CD4-positive, alpha-beta T cell (primary cell): ENCODE measurements at regions of chr18 and their contacts with region 1.

Region 1: DNA sequence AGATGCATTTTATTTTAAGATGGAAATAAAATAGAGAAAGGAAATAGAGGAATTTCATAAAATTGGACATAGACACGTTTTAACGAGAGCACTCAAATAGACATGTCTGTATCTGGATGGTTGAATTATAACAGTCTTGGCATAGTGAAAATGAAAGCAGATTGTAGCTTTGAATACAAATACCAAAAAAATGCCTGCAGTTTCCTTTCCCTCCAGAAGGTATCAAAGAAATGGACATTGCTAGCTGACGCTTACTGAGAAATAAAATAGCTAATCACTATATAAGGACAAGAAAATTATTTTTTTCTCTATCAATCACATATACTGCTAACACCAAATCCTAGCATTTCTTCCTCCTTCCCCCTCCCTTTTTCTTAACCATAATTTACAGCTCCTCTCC is 11.4 kb upstream of the MAPRE2 start:
- DNase-seq: peak in 3 of 14 experiments; percentile 65 to 80 (median 66)
- ATAC-seq: peak; percentile 39
- H3K4me3 ChIP-seq: peak overlapping the region; percentile 51
- H3K4me3 Mint-ChIP-seq: peak overlapping the region; percentile 82
- H3K27ac ChIP-seq: peak overlapping the region; percentile 80 to 89
- H3K27ac Mint-ChIP-seq: peak overlapping the region; percentile 98
- H3K4me1 ChIP-seq: peaks cover 34% of the 10 kb centered on the region
- H3K4me1 Mint-ChIP-seq: peaks cover 70% of the 10 kb centered on the region
- H3K27me3 ChIP-seq: no peaks in the 10 kb centered on the region
- H3K27me3 Mint-ChIP-seq: no peaks in the 10 kb centered on the region
- CTCF ChIP-seq: peak; percentile 16

Region 2: GRCh38 chr18:33987206-33987605 is 1042.6 kb before region 1 on chr18:
- CTCF ChIA-PET with region 1: no interaction called
- POLR2A ChIA-PET with region 1: no interaction called
- intact Hi-C with region 1: no loop called
- DNase-seq: no peak
- ATAC-seq: no peak
- H3K4me3 ChIP-seq: no peak overlapping the region
- H3K4me3 Mint-ChIP-seq: no peak overlapping the region
- H3K27ac ChIP-seq: no peak overlapping the region
- H3K27ac Mint-ChIP-seq: no peak overlapping the region
- H3K4me1 ChIP-seq: no peaks in the 10 kb centered on the region
- H3K4me1 Mint-ChIP-seq: no peaks in the 10 kb centered on the region
- H3K27me3 ChIP-seq: no peaks in the 10 kb centered on the region
- H3K27me3 Mint-ChIP-seq: no peaks in the 10 kb centered on the region
- CTCF ChIP-seq: no peak

Region 3: DNA sequence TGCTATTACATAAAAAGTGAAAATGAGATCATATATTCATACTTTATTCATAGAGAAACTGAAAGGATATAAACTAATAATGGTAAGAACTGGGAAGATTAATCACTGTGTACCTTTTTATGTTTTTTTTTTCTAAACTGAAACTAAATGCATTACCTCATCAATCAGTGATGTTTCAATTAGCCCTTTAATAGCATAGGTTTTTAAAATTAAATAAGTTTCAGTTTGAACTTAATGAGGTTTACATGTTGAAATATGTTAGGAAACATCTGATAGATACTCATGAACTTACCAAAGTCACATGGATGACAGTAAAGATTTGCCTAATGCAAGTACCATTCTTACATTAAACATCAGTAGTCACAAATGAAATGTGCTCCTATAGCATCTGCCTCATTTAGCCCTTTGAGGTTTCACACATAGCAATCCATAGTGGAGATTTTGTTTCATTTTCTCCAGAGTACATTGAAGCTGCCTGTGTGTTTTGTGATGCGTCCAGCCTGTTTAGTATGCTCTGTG is 20.3 kb after region 1 on chr18:
- CTCF ChIA-PET with region 1: interaction called, 6 read pairs
- POLR2A ChIA-PET with region 1: interaction called, 44 read pairs
- intact Hi-C with region 1: no loop called
- DNase-seq: peak in 1 of 14 experiments; percentile 28
- ATAC-seq: peak; percentile 15
- H3K4me3 ChIP-seq: no peak overlapping the region
- H3K4me3 Mint-ChIP-seq: peak overlapping the region; percentile 83
- H3K27ac ChIP-seq: no peak overlapping the region
- H3K27ac Mint-ChIP-seq: peak overlapping the region; percentile 83
- H3K4me1 ChIP-seq: peaks cover 34% of the 10 kb centered on the region
- H3K4me1 Mint-ChIP-seq: peaks cover 88% of the 10 kb centered on the region
- H3K27me3 ChIP-seq: no peaks in the 10 kb centered on the region
- H3K27me3 Mint-ChIP-seq: no peaks in the 10 kb centered on the region
- CTCF ChIP-seq: no peak

Region 4: DNA sequence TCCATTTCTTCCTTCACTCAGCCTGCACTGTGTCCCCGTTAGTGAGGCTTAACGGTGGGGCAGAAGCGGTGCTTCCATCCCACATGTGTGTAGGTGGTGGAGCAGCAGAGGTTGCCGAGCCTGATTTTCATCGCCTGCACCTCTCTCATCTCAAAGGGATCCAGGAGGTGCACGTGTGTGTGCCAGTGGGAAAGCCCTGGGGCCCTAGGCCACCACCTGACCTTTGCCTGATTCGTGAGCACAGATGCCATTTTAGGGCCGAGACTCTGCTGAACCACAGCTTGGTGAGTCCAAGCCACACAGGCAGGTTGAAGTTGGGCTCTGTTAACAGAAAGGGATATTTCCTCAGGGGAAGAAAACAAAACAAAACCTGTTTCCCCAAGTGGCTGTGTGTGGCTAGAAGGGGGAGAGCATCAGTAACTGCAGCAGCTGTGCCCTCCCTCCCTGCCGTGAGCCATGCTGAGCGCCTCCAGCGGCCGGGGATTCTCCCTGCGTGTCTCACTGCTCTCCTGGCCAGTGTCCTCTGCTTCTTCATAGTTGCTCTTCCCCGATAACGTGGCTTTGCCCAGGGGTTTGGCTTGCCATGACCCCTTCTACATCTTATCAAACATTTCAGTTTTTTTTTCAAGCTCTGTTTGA is 92.9 kb after region 1 on chr18:
- CTCF ChIA-PET with region 1: interaction called, 11 read pairs
- POLR2A ChIA-PET with region 1: interaction called, 4 read pairs
- intact Hi-C with region 1: loop called in 1 of 2 experiments (anchors 5 kb)
- DNase-seq: peak in 3 of 14 experiments; percentile 35 to 45 (median 45)
- ATAC-seq: peak; percentile 65
- H3K4me3 ChIP-seq: no peak overlapping the region
- H3K4me3 Mint-ChIP-seq: no peak overlapping the region
- H3K27ac ChIP-seq: no peak overlapping the region
- H3K27ac Mint-ChIP-seq: peak overlapping the region; percentile 39
- H3K4me1 ChIP-seq: peaks cover 14% of the 10 kb centered on the region
- H3K4me1 Mint-ChIP-seq: peaks cover 70% of the 10 kb centered on the region
- H3K27me3 ChIP-seq: no peaks in the 10 kb centered on the region
- H3K27me3 Mint-ChIP-seq: no peaks in the 10 kb centered on the region
- CTCF ChIP-seq: no peak

Region 5: DNA sequence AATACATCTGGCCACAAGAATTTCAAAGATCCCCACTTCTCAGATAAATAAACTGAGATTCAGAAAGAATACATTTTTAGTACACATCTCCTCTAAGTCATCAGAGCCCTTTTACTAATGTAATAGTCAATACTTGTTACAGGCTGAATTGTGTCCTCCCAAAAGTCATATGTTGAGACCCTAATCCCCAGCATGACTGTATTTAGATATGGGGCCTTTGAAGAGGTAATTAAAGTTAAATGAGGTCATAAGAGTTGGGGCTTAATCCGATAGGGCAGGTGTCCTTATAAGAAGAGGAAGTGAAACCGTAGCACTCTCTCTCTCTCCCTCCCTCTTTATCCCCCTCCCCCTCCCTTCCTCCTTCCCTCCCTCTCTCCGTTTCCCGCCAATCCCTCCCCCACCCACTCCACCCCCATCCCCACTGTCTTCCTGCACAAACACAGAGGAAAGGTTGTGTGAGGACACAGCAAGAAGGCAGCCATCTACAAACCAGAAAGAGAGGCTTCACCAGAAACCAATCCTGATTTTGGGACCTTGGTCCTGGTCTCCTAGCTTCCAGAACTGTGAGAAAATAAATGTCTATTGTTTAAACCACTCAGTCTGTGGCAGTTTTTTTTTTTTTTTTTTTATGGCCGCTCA is 144.4 kb after region 1 on chr18:
- CTCF ChIA-PET with region 1: no interaction called
- POLR2A ChIA-PET with region 1: no interaction called
- intact Hi-C with region 1: no loop called
- DNase-seq: peak in 2 of 14 experiments; percentile 13 to 22
- ATAC-seq: peak; percentile 51
- H3K4me3 ChIP-seq: no peak overlapping the region
- H3K4me3 Mint-ChIP-seq: no peak overlapping the region
- H3K27ac ChIP-seq: no peak overlapping the region
- H3K27ac Mint-ChIP-seq: no peak overlapping the region
- H3K4me1 ChIP-seq: no peaks in the 10 kb centered on the region
- H3K4me1 Mint-ChIP-seq: peaks cover 20% of the 10 kb centered on the region
- H3K27me3 ChIP-seq: no peaks in the 10 kb centered on the region
- H3K27me3 Mint-ChIP-seq: no peaks in the 10 kb centered on the region
- CTCF ChIP-seq: no peak

Region 6: GRCh38 chr18:35240664-35241447 is 211.1 kb after region 1 on chr18 and contains the start of gene ZNF397:
- CTCF ChIA-PET with region 1: interaction called, 4 read pairs
- POLR2A ChIA-PET with region 1: interaction called, 15 read pairs
- intact Hi-C with region 1: no loop called
- DNase-seq: peak; percentile 87 to 97 (median 94)
- ATAC-seq: peak; percentile 96
- H3K4me3 ChIP-seq: peak within 1 kb of the TSS; percentile 83
- H3K4me3 Mint-ChIP-seq: peak within 1 kb of the TSS; percentile 98
- H3K27ac ChIP-seq: peak within 1 kb of the TSS; percentile 90 to 94
- H3K27ac Mint-ChIP-seq: peak within 1 kb of the TSS; percentile 99
- H3K4me1 ChIP-seq: peaks cover 9% of the 10 kb centered on the region
- H3K4me1 Mint-ChIP-seq: peaks cover 37% of the 10 kb centered on the region
- H3K27me3 ChIP-seq: no peaks in the 10 kb centered on the region
- H3K27me3 Mint-ChIP-seq: no peaks in the 10 kb centered on the region
- CTCF ChIP-seq: no peak
- total RNA-seq, gene ZNF397: 7.6 to 10.0 TPM

Region 7: GRCh38 chr18:35355140-35355618 is 325.4 kb after region 1 on chr18:
- CTCF ChIA-PET with region 1: interaction called, 3 read pairs
- POLR2A ChIA-PET with region 1: no interaction called
- intact Hi-C with region 1: loop called (anchors 2 kb)
- DNase-seq: peak; percentile 39 to 85 (median 48)
- ATAC-seq: peak; percentile 95
- H3K4me3 ChIP-seq: no peak overlapping the region
- H3K4me3 Mint-ChIP-seq: no peak overlapping the region
- H3K27ac ChIP-seq: no peak overlapping the region
- H3K27ac Mint-ChIP-seq: no peak overlapping the region
- H3K4me1 ChIP-seq: no peaks in the 10 kb centered on the region
- H3K4me1 Mint-ChIP-seq: peaks cover 4% of the 10 kb centered on the region
- H3K27me3 ChIP-seq: no peaks in the 10 kb centered on the region
- H3K27me3 Mint-ChIP-seq: no peaks in the 10 kb centered on the region
- CTCF ChIP-seq: peak; percentile 68